Right ventricle myocardium inferior (tissue), 1 donor: ENCODE measurements at regions of chr9 and their contacts with region 1.

Region 1: DNA sequence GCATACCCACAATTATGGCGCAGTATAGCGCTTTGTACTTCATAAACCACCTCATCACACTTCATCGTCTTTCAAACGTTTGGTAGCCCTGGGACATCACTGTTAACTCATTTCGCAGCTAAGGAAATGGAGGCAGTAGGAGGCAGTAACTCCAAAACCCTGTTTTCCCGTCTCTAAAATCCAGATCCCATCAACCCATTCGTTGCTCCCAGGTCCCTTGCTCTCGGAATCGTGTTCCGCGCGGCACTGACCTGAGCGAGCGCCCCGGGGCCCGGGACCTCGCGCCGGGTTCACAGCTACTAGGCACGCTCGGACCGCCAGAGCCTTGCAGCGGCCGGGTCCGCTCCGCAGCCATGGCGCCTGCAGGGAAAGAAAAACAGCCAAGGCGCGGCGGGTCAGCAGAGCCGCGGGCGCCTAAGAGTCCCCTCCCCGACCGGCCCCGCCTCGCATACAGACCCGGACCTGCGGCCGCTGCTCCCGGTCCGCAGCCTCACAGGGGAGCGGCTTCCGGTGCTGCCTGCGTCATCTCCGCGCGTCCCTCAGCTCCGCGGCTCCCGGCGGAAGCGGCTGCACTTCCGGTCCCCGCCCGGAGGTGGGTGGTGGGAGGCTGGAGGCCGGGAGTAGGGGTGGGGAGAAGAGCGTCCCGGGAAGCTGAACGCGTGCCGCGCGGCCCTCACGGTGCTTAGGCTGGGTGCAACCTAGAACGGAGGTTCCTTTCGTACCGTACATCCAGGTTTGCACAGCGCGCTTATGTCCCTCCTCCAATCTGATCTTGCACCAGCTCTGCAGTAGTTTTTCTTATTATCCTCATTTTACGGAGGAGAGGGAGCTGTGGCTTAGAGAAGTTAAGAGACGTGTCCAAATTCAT is at the start of gene FBXW2:
- DNase-seq: peak; percentile 96
- ATAC-seq: peak; percentile 100
- total RNA-seq, gene FBXW2: 41.0 TPM

Region 2: DNA sequence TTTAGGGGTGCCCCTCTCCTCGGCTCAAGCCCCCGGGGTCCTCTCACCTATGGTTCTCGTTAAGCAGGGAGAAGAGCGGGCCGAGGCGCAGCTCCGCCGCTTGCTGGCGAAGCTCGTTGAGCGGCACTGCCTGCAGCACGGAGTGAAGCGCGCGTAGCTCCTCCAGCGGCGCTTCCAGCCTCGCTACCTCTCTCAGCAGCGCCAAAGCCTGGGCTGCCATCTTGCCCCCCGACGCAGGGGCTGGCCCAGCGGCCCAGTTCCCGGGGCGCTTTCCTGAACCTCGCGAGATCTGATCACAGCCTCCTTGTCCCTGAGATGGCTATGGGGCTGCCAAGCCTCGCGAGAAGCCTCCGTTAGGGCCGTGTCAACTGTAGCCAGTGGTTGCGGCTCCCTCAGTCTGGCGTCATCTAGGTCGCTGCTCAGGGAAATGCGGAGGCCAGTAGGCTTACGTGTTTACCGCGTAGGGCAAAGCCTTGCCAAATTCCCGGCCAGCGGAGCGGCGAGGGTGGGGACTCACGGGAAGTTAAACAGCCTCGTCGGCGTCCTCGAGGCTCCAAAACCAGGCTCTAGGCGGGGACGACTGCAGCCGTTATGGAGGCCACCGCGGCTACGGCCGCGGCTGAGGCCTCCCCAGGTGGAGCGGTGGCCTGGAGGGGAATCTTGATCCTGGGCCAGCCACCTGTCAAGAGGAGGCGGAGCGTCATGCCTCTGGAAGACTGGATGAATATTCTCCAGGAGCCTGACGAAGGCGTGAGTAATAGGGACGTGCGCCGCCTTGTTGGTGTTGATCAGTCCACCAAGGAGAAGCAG is 49.8 kb after region 1 on chr9 and contains the start of gene PSMD5:
- intact Hi-C with region 1: loop called (anchors 2 kb)
- DNase-seq: peak; percentile 99
- ATAC-seq: peak; percentile 99
- total RNA-seq, gene PSMD5: 15.3 TPM

Region 3: DNA sequence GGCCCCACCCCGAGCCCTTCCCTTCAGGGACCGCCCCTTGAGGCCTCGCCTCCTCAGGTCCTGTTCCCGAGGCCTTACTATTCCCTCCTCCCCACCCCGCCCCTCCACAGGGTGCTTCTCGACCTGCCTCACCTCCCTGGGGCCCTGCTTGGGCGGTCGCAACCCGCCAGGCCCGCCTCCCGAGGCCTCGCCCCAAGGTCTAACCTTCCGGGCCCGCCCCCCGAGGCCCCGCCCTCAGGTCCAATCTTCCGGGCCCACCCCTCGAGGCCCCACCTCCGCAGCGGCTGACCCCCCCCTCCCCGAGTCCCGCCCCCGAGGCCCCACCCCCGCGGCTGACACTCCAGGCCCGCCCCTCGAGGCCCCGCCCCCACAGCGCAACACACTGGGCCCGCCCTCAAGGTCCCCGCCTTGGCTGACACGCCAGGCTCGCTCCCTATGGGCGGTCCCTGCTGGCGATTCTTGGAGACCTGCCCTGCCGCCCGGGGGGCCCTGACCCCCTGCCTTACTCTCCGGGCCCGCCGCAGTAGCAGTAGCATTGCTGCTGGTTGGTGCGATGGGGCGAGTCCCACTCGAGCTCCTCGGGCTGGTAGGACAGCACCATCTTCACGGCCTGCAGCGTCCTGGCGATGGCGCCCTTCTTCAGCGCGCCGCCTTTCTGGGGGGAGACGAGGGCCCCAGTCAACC is 75.7 kb after region 1 on chr9:
- intact Hi-C with region 1: loop called (anchors 5 kb)
- DNase-seq: peak; percentile 98
- ATAC-seq: peak; percentile 95

Region 4: DNA sequence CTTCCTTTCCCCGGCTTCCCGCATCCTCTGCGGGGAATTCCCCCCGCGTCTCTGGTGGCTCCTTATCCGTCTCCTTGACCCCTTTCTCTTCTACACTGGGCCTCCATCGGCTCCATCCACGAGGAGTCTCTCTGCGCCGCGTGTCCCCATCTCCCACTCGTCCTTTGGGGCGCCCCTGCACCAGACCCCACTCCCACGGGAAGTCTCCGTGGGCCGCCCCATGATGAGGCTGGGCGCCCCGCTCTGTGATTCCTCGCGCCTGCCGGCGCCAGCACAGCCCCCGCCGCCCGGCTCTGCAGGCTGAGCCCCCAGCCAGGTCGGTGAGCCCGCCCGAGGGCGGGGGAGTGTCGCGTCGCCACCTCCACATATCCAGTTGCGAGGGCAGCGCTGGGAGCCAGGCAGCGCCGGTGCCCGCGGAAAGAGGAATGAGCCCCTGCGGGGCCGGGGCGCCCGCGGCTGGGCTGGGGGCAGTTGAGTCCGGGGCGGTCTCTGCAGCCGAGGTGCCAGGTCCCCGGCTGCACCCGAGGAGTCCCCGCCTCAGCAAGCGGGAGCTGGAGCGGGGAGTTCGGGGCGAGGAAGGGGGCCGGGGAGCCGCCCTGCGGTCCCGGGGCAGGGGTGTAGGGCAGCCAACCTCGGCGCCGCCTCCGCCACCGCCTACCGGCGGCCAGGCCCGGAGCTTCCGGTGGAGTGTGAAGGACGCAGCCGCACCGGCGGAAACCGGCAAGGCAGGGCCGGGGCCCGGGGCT is 135.5 kb after region 1 on chr9:
- intact Hi-C with region 1: loop called (anchors 5 kb)
- DNase-seq: peak; percentile 92
- ATAC-seq: peak; percentile 93